Vagina (tissue), 2 donors: ENCODE measurements at regions of chr5 and their contacts with region 1.

Region 1: DNA sequence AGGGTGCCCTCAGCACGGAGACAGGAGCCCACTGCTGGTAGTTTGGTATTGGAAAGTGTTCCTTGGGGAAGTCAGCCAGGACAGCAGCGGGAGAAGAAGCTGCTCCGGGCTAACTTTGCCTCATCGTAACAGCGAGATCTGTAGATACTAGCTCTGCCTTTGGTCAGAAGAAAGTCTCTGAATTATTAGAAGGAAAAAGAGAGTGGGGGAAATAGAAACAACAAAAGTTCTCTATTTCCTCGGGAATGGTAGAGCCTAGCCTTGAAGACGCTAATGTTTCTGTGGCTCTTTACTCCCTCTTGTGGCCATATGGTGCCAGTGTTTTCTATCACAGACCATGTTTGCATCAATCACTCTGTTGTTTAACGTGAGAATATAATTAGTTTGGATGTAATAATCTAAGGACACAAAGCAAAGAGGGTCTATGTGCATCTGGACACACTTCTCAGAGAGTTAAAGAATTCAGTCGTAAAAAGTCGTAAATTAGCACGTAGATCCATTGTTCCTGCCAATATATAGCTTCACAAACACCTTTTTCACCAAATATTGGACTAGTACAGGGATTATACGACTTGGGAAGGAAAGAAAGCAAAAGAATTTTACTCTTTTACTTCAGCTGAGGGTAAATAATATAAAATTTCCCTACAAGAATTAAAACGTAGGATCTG is 40.2 kb upstream of the HSD17B4 start:
- DNase-seq: no peak
- H3K4me3 ChIP-seq: peak overlapping the region; percentile 40 to 43
- H3K27ac ChIP-seq: peak overlapping the region; percentile 78
- H3K4me1 ChIP-seq: peaks cover 15% of the 10 kb centered on the region
- H3K27me3 ChIP-seq: no peaks in the 10 kb centered on the region
- CTCF ChIP-seq: peak; percentile 95 to 97 (median 96)
- POLR2A ChIP-seq: no peak

Region 2: GRCh38 chr5:119267958-119268386 is 144.1 kb before region 1 on chr5:
- intact Hi-C with region 1: loop called (anchors 10 kb)
- DNase-seq: peak in 1 of 2 donors; percentile 96
- H3K4me3 ChIP-seq: peak overlapping the region; percentile 87 to 90
- H3K27ac ChIP-seq: peak overlapping the region; percentile 91
- H3K4me1 ChIP-seq: peaks cover 35% of the 10 kb centered on the region
- H3K27me3 ChIP-seq: no peaks in the 10 kb centered on the region
- CTCF ChIP-seq: peak in 1 of 3 experiments; percentile 35
- POLR2A ChIP-seq: no peak